Prostate gland (tissue), 2 donors: ENCODE measurements at regions of chr5 and their contacts with region 1.

Region 1: DNA sequence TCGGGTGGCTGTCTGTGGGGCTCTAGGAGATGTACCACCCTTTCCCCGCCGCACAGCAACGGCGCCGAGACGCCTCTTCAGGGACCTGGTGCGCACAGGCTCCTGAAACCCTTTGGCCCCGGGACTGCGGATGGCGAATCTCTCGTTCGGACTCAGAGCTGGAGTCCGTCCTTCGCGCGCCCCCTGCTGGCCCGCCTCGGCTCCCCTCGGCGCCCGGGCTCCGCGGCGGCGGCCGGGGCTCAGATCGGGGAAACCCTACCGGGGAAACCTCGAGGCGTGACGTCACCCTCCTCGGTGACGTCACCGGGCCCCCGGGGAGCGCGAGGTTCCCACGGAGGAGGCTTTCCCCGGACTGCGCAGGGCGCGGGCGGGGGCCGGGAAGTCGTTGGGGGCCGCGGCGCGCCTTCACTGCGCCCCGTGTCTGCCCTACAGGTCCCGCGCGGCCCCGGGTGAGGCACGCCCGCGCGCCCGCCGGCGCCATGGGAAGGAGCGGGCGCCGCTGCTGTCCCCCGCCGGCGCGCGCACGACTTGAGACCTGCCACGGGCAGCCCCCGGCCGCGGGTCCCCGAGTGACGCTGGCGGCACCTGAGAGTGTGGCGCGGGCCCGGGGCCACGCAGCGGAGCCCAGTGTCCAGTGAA is 7.9 kb downstream of the PRR7 start:
- DNase-seq: peak; percentile 90
- H3K4me3 ChIP-seq: peak overlapping the region; percentile 42 to 54
- H3K27ac ChIP-seq: peak overlapping the region; percentile 71 to 79
- H3K4me1 ChIP-seq: no peaks in the 10 kb centered on the region
- H3K27me3 ChIP-seq: no peaks in the 10 kb centered on the region
- CTCF ChIP-seq: peak; percentile 92 to 99 (median 98)
- POLR2A ChIP-seq: no peak

Region 2: DNA sequence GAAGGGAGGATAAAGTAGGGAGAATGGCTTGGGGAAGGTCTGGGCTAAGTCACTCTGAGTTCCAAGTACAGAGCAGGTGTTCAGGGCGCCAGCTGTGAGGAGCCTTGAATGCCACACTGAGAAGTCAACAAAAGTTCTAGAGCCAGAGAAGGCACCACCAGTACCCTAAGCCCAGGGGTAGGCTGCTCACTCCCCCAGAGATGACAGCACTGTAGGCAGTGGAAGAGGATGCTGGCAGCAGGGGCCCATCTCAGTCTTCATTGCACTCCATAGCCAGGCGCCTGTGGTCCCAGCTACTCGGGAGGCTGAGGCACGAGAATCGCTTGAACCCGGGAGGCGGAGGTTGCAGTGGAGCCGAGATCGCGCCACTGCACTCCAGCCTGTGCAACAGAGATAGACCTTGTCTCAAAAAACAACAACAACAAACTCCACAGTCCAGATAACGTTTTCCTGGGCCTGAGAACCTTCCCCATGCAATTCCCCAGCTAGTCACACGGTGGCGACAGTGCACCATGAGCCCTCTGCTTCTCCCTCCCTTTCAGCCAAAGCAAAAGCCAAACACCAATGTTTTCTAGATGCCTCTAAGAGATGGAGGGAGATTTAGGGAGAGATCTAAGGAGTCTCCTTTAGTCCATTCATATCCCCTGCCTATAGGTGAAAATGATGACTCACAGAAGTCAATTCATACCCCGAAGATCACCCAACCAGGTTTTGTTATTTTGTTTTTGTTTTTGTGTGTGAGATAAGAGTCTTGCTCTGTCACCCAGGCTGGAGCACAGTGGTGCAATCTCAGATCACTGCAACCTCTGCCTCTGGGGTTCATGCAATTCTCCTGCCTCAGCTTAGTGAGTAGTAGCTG is 340.7 kb before region 1 on chr5:
- intact Hi-C with region 1: no loop called
- DNase-seq: peak; percentile 59
- H3K4me3 ChIP-seq: no peak overlapping the region
- H3K27ac ChIP-seq: no peak overlapping the region
- H3K4me1 ChIP-seq: peaks cover 2% of the 10 kb centered on the region
- H3K27me3 ChIP-seq: no peaks in the 10 kb centered on the region
- CTCF ChIP-seq: peak; percentile 88 to 97 (median 93)
- POLR2A ChIP-seq: no peak

Region 3: DNA sequence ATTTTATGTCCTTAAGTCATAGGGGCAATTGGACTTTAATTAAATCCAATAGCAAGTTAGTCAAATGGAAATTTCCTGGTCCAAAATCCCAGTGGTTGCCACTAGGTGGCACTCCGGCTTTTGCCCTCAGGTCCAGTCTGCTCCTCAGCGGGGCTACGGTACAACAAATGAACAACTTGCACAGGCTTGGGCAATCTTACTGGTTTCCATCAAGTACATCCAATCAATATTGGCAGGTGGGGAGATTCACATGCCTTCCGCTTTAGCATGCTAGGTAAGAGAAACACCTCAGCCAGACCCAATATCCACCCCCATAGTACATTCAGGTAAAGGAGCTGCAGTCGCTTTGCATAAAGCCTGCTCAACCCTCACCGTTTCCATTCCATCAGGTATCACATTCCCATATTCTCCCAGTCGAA is 136.5 kb before region 1 on chr5:
- intact Hi-C with region 1: loop called (anchors 5 kb)
- DNase-seq: peak; percentile 80
- H3K4me3 ChIP-seq: no peak overlapping the region
- H3K27ac ChIP-seq: no peak overlapping the region
- H3K4me1 ChIP-seq: no peaks in the 10 kb centered on the region
- H3K27me3 ChIP-seq: no peaks in the 10 kb centered on the region
- CTCF ChIP-seq: peak; percentile 71 to 91 (median 81)
- POLR2A ChIP-seq: no peak

Region 4: DNA sequence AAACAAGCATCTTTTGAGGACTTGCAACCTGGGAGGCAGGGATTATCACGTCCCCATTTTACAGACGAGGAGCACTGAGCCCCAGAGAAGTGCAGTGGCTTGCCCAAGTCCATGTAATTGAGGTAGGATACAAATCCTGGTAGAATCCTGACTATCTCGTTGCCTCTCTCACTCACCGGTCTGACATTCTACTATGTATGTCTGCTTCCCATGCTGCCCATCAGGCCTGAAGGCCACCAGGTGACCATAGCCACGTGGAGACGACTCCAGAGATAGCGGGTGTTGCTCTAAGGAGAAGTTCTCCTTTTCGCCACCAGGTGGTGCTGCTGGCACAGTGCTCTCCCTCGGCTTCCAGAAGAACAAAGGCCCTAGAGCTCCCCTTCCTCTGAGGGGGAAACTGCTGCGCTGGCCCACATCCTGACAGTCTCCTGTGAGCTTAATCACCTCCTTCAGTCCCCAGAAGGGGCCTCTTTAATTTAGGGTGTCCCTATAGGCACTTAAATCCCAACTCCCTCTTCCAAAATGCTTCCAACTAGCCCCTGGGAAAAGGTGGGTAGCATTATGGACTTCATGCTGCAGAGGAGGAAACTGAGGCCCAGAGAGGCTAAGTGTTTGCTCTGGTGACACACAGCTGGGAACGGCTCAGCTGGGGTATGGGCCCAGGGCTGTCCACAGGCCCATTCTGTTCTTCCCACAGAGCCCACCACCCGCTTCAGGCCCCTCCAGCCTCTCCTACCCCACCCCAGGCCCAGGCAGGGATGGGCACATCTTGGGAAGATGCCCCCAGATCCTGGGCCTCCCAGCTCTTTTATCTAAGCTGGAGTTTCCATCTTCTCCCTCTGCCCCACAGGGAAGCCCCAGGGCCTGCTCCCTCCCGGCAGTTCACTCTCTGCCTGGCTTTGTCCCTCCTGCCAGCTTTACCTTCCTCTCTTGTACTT is 63.9 kb before region 1 on chr5:
- intact Hi-C with region 1: loop called (anchors 2 kb)
- DNase-seq: peak; percentile 82
- H3K4me3 ChIP-seq: no peak overlapping the region
- H3K27ac ChIP-seq: peak overlapping the region; percentile 58 to 64
- H3K4me1 ChIP-seq: no peaks in the 10 kb centered on the region
- H3K27me3 ChIP-seq: no peaks in the 10 kb centered on the region
- CTCF ChIP-seq: peak; percentile 96 to 99 (median 97)
- POLR2A ChIP-seq: no peak

Region 5: GRCh38 chr5:177403792-177404640 is 50.5 kb before region 1 on chr5:
- intact Hi-C with region 1: loop called (anchors 2 kb)
- DNase-seq: peak; percentile 82
- H3K4me3 ChIP-seq: peak overlapping the region; percentile 34 to 45
- H3K27ac ChIP-seq: peak overlapping the region in 1 of 2 donors; percentile 27
- H3K4me1 ChIP-seq: peaks cover 21% of the 10 kb centered on the region
- H3K27me3 ChIP-seq: no peaks in the 10 kb centered on the region
- CTCF ChIP-seq: peak; percentile 31 to 90 (median 72)
- POLR2A ChIP-seq: no peak

Region 6: DNA sequence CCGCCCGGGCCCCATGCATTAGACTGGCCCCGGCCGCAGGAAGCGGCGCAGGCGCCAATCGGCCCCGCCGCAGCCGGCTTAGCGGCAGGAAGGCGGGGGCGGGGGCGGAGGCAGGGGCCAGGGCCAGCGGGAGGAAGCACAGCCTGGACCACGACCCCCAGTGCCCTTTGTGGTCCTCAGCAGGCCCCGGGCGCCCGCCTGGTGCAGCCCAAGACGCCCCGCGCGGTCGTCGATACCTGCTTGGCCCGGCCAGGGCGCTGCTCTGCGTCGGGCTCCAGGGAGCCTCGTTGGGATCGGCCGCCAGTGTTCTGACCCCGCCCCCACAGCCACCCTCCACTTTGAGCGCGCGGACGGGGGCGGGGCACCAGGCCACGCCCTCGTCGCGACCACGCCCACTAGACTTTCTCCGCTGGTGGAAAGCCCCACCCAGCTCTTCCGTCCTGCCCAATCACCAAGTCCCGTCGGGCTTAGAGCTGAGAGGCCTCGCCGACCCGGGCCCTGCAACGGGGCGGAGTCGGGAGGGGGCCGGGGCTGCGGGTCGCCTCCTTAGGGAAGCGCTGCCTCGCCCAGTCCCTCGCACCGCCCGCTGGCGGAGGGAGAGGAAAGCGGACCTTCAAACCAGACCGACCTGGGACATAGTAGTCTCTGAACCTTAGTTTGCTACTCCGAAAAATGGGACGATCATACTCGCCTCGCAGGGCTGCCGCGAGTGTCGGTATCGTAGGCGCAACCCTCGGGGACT is 42.9 kb after region 1 on chr5 and contains the start of gene PDLIM7:
- intact Hi-C with region 1: loop called (anchors 2 kb)
- DNase-seq: peak; percentile 95
- H3K4me3 ChIP-seq: peak within 1 kb of the TSS; percentile 57 to 78
- H3K27ac ChIP-seq: peak within 1 kb of the TSS; percentile 86 to 92
- H3K4me1 ChIP-seq: peaks cover 4% of the 10 kb centered on the region
- H3K27me3 ChIP-seq: no peaks in the 10 kb centered on the region
- CTCF ChIP-seq: peak in 1 of 4 experiments; percentile 5
- POLR2A ChIP-seq: peak; percentile 95
- total RNA-seq, gene PDLIM7: 155 to 235 TPM